ENCODE measurements at regions of chr19 and their contacts with region 1.

Region 1: GRCh38 chr19:18450931-18451845 is 13.3 kb upstream of the ISYNA1 start:
- DNase-seq: peak; percentile 90
- ATAC-seq: peak; percentile 93
- H3K4me3 Mint-ChIP-seq: no peak overlapping the region
- H3K27ac Mint-ChIP-seq: peak overlapping the region; percentile 49
- H3K4me1 Mint-ChIP-seq: peaks cover 2% of the 10 kb centered on the region
- H3K27me3 Mint-ChIP-seq: no peaks in the 10 kb centered on the region

Region 2: DNA sequence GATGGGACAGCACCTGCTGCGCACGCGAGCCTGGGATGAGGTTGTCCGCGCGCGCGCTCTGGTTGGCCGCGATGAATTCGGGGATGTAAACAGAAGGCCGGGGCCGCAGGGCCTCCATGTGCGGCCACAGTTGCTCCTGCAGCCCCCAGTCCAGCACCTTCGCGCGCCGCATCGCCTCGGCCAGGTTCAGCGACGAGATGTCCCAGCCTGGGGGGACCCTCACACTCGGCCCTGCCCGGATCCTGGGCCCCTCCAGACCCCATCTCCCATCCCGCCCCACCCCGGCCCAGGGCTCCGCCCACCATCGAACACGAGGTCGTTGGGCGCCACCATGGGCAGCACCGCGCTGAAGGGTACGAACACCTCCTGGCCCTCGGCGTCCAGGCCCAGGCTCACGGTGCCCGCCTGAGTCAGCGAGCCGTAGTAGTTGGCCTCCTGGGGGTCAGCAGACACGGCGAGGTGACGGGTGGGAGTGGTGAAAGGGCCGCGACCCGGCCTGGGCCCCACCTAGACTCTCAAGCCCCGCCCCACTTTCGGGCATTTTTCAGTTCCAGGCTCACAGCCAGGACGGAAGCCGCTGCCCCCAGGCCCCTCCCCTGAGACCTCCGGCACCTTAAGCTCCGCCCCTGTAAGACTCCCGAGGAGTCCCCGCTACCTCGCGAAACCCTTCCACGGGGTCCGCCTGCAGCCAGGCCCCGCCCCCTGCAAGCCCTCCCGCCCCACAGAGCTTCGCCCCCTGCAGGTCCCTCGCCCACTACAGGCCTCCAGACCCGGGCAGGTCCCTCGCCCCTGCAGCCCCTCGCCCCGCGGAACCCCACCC is 14.3 kb before region 1 on chr19:
- CTCF ChIA-PET with region 1: interaction called, 10 read pairs
- DNase-seq: peak; percentile 92
- ATAC-seq: peak; percentile 79
- H3K4me3 Mint-ChIP-seq: peak overlapping the region; percentile 64
- H3K27ac Mint-ChIP-seq: peak overlapping the region; percentile 61
- H3K4me1 Mint-ChIP-seq: peaks cover 24% of the 10 kb centered on the region
- H3K27me3 Mint-ChIP-seq: no peaks in the 10 kb centered on the region

Region 3: GRCh38 chr19:18461451-18461850 is 10.3 kb after region 1 on chr19:
- CTCF ChIA-PET with region 1: interaction called, 38 read pairs
- DNase-seq: no peak
- ATAC-seq: no peak
- H3K4me3 Mint-ChIP-seq: no peak overlapping the region
- H3K27ac Mint-ChIP-seq: no peak overlapping the region
- H3K4me1 Mint-ChIP-seq: peaks cover 12% of the 10 kb centered on the region
- H3K27me3 Mint-ChIP-seq: no peaks in the 10 kb centered on the region

Region 4: DNA sequence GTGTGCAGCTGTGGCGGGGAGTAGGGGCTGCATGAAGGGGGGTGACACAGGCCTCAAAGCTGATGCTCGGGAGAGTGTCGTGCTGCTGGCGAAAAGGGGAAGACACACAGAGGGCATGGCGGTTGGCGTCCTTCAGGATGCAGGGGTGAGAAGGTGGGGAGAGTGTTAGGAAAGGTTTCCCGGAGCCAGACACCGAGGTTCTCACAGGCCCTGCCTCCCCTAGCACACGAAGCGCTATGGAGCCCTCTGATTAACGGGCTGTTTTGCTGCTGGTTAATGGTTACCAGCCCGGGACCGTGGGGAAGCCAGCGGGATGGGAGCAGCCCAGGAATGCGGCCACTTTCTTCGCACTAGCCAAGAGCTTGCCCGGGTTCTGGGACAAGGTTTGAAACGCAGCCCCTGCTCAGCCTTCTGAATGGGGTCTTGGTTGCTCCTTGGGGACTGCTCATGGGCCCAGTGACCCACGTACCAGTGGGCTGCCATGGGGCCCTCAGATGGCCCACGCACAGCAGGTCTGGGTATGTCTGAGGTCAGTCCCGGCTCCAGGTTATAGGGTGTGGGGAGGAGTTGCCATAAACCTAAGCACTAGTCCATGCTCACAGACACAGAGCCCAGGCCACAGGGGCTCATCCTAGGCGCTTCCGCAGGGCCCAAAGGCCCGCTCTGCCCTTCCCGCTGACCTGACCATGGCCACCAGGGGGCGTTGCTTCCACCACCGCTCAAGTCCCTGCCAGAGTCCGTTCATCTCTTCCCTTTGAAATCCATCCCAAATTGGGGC is 18.1 kb after region 1 on chr19:
- CTCF ChIA-PET with region 1: interaction called, 38 read pairs
- DNase-seq: peak; percentile 63
- ATAC-seq: peak; percentile 57
- H3K4me3 Mint-ChIP-seq: no peak overlapping the region
- H3K27ac Mint-ChIP-seq: no peak overlapping the region
- H3K4me1 Mint-ChIP-seq: peaks cover 25% of the 10 kb centered on the region
- H3K27me3 Mint-ChIP-seq: no peaks in the 10 kb centered on the region

Region 5: GRCh38 chr19:18529782-18530181 is 78.6 kb after region 1 on chr19:
- CTCF ChIA-PET with region 1: no interaction called
- DNase-seq: no peak
- ATAC-seq: no peak
- H3K4me3 Mint-ChIP-seq: no peak overlapping the region
- H3K27ac Mint-ChIP-seq: no peak overlapping the region
- H3K4me1 Mint-ChIP-seq: no peaks in the 10 kb centered on the region
- H3K27me3 Mint-ChIP-seq: no peaks in the 10 kb centered on the region

Measured in activated CD8-positive, alpha-beta memory T cell treated with anti-CD3 and anti-CD28 coated beads, Interleukin-2, amount 10 ng/mL, durations not matched to agents 7 days and 5 days (primary cell).